Activated CD4-positive, alpha-beta T cell treated with anti-CD3 and anti-CD28 coated beads, Interleukin-2, amount 10 ng/mL, durations not matched to agents 7 days and 5 days (primary cell): ENCODE measurements at regions of chr21 and their contacts with region 1.

Region 1: GRCh38 chr21:41816220-41817165 is 49.6 kb upstream of the RIPK4 start:
- DNase-seq: peak; percentile 65
- H3K4me3 Mint-ChIP-seq: no peak overlapping the region
- H3K27ac Mint-ChIP-seq: no peak overlapping the region
- H3K4me1 Mint-ChIP-seq: peaks cover 3% of the 10 kb centered on the region
- H3K27me3 Mint-ChIP-seq: no peaks in the 10 kb centered on the region

Region 2: DNA sequence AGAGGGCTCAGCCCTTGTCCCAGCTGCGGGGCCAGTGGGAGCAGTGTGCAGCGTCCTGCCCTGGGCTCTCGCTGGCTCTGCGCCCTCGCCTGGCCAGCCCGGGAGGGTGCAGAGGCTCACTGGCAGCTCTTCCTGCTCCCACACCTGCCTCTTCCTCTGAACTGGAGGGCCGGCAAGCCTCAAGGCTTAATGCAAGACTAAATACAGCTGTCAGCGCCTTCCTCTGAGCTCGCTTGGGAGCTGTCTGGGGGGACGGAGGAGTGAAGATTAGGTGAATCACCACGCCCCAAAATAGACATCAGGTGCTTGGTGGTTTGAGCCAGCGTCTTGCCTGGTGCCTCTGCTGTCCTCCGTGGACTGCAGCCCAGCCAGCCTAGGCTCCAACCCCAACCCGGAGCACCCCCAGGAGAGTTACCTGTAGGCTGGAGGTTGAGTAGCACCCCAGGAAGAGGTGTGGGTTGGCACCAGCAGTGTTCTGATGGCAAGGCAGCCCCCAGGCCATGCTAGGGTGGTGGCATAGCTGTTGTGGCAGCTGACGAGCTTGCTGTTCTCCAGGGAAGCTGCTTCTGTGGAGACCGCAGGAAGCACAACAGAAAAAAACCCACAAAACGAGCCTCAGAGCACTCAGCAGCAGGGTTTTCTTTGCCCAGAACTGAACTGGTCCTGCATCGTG is 291.5 kb after region 1 on chr21:
- CTCF ChIA-PET with region 1: interaction called, 12 read pairs
- POLR2A ChIA-PET with region 1: no interaction called
- DNase-seq: peak; percentile 70
- H3K4me3 Mint-ChIP-seq: no peak overlapping the region
- H3K27ac Mint-ChIP-seq: peak overlapping the region; percentile 57
- H3K4me1 Mint-ChIP-seq: peaks cover 10% of the 10 kb centered on the region
- H3K27me3 Mint-ChIP-seq: peaks cover 10% of the 10 kb centered on the region

Region 3: GRCh38 chr21:42117229-42117966 is 300.9 kb after region 1 on chr21:
- CTCF ChIA-PET with region 1: interaction called, 15 read pairs
- POLR2A ChIA-PET with region 1: no interaction called
- DNase-seq: peak; percentile 79
- H3K4me3 Mint-ChIP-seq: no peak overlapping the region
- H3K27ac Mint-ChIP-seq: no peak overlapping the region
- H3K4me1 Mint-ChIP-seq: peaks cover 41% of the 10 kb centered on the region
- H3K27me3 Mint-ChIP-seq: peaks cover 53% of the 10 kb centered on the region